ENCODE measurements at regions of chr9 and their contacts with region 1.

Region 1: DNA sequence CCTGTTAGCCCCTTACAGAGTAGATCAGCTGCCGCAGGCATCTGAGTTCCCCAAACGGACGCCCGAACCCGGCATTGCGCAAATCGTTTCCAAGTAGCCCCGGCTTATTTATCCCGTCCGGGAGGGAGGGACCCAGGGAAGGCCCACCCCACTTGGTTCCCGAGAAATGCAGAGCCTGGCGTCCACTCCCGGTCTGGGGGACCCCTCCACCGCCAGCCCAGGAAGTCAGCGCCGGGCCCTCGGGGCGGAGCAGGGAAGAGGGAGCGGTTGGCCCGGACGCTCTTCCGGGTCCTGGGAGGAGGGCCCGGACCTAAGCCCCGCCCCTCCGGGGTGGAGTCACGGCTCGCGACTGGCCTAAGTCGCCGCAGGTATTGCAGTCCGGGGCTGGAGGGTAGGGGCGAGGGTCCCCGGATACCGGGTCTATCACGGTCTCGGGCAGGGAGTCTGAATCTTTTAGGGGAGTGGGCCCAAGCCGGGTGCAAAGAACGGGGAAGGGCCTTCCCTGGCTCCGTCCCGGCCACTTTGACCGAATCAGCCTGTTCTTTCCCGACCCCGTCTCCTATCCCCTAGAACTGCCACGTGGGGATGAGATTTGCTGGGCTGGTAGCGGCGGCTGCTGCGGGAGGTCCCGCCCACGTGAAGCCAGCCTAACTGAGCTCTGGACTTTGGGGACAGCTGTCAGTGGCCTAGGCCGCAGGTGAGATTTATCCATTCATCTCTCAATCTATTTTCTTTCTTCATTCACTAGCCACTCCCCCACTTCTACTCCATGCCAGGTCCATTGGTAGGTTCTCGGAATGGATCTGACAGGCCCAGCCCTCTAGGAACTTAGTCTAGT is at the start of gene RABEPK:
- DNase-seq: peak; percentile 79 to 94 (median 88)
- ATAC-seq: peak; percentile 94
- H3K4me3 ChIP-seq: peak within 1 kb of the TSS; percentile 92
- H3K4me3 Mint-ChIP-seq: peak within 1 kb of the TSS; percentile 93
- H3K27ac ChIP-seq: peak within 1 kb of the TSS; percentile 63 to 91
- H3K27ac Mint-ChIP-seq: peak within 1 kb of the TSS; percentile 79
- H3K4me1 ChIP-seq: peaks cover 54% of the 10 kb centered on the region
- H3K4me1 Mint-ChIP-seq: peaks cover 63% of the 10 kb centered on the region
- H3K27me3 ChIP-seq: no peaks in the 10 kb centered on the region
- H3K27me3 Mint-ChIP-seq: no peaks in the 10 kb centered on the region
- CTCF ChIP-seq: no peak
- total RNA-seq, gene RABEPK: 6.8 to 8.3 TPM

Region 2: DNA sequence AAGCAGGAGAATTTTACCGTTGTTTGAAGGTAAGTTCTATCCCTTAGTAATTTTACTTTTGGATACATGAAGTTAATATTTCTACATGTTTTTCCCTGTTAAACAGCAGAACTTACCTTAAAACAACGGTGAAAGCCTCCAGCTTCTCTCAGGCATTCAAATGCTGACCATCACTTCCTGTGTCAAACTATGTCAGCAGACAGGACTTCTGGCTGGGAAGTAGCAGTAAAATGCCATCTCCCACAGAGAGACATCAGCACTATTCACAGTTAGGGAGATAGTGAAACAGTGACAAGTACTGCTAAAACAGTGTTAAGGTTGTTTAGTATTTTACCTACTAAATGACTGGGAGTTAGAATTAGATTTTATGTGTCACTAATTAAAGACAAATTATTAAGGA is 225.3 kb before region 1 on chr9:
- CTCF ChIA-PET with region 1: no interaction called
- POLR2A ChIA-PET with region 1: no interaction called
- intact Hi-C with region 1: no loop called
- DNase-seq: no peak
- ATAC-seq: no peak
- H3K4me3 ChIP-seq: no peak overlapping the region
- H3K4me3 Mint-ChIP-seq: no peak overlapping the region
- H3K27ac ChIP-seq: no peak overlapping the region
- H3K27ac Mint-ChIP-seq: no peak overlapping the region
- H3K4me1 ChIP-seq: no peaks in the 10 kb centered on the region
- H3K4me1 Mint-ChIP-seq: no peaks in the 10 kb centered on the region
- H3K27me3 ChIP-seq: no peaks in the 10 kb centered on the region
- H3K27me3 Mint-ChIP-seq: no peaks in the 10 kb centered on the region
- CTCF ChIP-seq: no peak

Region 3: GRCh38 chr9:125119643-125120286 is 80.7 kb before region 1 on chr9:
- CTCF ChIA-PET with region 1: no interaction called
- POLR2A ChIA-PET with region 1: no interaction called
- intact Hi-C with region 1: loop called in 1 of 2 experiments (anchors 5 kb)
- DNase-seq: peak in 5 of 14 experiments; percentile 10 to 62 (median 30)
- ATAC-seq: peak; percentile 95
- H3K4me3 ChIP-seq: no peak overlapping the region
- H3K4me3 Mint-ChIP-seq: peak overlapping the region; percentile 66
- H3K27ac ChIP-seq: no peak overlapping the region
- H3K27ac Mint-ChIP-seq: peak overlapping the region; percentile 52
- H3K4me1 ChIP-seq: peaks cover 14% of the 10 kb centered on the region
- H3K4me1 Mint-ChIP-seq: peaks cover 41% of the 10 kb centered on the region
- H3K27me3 ChIP-seq: no peaks in the 10 kb centered on the region
- H3K27me3 Mint-ChIP-seq: no peaks in the 10 kb centered on the region
- CTCF ChIP-seq: peak; percentile 36

Region 4: GRCh38 chr9:125189361-125190289 is 10.8 kb before region 1 on chr9 and contains the start of gene PPP6C:
- CTCF ChIA-PET with region 1: interaction called, 4 read pairs
- POLR2A ChIA-PET with region 1: interaction called, 26 read pairs
- intact Hi-C with region 1: no loop called
- DNase-seq: peak; percentile 95 to 99 (median 97)
- ATAC-seq: peak; percentile 92
- H3K4me3 ChIP-seq: peak within 1 kb of the TSS; percentile 100
- H3K4me3 Mint-ChIP-seq: peak within 1 kb of the TSS; percentile 91
- H3K27ac ChIP-seq: peak within 1 kb of the TSS; percentile 95 to 98
- H3K27ac Mint-ChIP-seq: peak within 1 kb of the TSS; percentile 96
- H3K4me1 ChIP-seq: peaks cover 77% of the 10 kb centered on the region
- H3K4me1 Mint-ChIP-seq: peaks cover 73% of the 10 kb centered on the region
- H3K27me3 ChIP-seq: no peaks in the 10 kb centered on the region
- H3K27me3 Mint-ChIP-seq: no peaks in the 10 kb centered on the region
- CTCF ChIP-seq: peak; percentile 63
- total RNA-seq, gene PPP6C: 32.9 to 35.3 TPM

Measured in CD4-positive, alpha-beta T cell (primary cell).